ENCODE measurements at regions of chr4 and their contacts with region 1.

Region 1: DNA sequence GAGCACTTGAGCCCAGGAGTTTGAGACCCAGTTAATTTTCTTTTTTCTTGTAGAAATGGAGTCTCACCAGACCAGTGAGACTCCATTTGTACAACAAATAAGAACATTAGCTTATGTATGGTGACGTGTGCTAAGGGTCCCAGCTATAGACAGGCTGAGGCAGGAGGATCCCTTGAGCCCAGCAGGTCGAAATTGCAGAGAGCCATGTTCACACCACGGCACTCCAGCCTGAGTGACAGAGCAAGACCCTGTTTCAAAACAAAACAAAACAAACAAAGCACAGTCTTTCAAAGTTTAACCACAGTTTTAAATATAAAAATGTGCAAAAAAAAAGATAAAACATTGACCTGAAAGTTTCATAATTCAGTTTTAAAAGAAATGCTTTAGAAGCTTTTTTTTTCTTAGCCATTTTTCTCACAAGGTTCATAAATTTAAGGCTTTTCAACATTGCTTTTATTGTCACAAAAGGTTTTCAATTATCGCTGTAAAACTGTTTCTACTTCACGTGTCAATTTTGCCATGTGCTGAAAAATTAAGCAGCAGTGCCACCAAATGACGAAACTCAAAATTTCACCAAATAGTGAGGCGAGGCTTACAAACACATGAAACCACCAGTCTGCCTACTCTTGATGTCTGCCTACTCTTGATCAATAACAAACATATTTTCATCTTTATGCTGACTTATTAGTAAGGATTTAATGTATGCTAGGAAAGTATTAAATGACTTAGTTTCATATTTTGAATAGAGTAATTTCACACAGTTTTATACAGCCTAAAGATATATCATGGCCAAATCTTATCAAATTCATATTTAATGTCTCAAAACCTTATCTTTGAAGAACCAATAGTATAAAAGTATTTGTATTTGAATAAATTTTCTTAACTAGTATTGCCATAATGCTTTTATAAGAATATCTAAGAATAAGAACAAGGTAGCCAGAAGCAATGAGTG is 126.3 kb downstream of the NEK1 start:
- DNase-seq: peak; percentile 54 to 79
- H3K4me3 ChIP-seq: no peak overlapping the region
- H3K4me1 ChIP-seq: 0 out of 2 replicates have a peak, but pooled peaks cover 8% of the 10 kb centered on the region
- H3K27me3 ChIP-seq: no peaks in the 10 kb centered on the region

Region 2: GRCh38 chr4:169010125-169011023 is 475.7 kb before region 1 on chr4 and contains the start of gene CBR4:
- in situ Hi-C with region 1: loop called (anchors 10 kb)
- DNase-seq: peak; percentile 97 to 98
- H3K4me3 ChIP-seq: peak within 1 kb of the TSS; percentile 57
- H3K4me1 ChIP-seq: peaks cover 21% of the 10 kb centered on the region
- H3K27me3 ChIP-seq: no peaks in the 10 kb centered on the region

Region 3: DNA sequence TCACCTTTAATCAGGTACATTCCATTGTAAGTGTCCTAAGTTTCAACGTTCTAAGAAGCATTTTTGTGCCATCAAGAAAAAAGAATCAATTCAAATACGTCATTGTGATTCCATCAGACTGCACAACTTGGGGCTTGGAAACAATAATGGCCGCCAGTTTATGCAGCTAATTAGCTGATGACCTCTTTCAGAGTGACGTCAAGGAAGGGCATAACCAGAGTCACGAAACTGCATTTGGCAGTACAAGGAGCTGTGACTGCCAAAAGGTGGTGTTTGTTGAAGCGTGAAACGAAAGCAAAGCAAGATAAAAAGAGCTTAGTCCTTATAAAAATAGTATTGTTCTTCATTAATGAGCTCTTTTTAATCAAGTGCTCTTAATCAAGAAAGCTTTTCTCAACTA is 134.2 kb before region 1 on chr4:
- in situ Hi-C with region 1: no loop called
- DNase-seq: no peak
- H3K4me3 ChIP-seq: no peak overlapping the region
- H3K4me1 ChIP-seq: no peaks in the 10 kb centered on the region
- H3K27me3 ChIP-seq: no peaks in the 10 kb centered on the region